ENCODE measurements at regions of chr3 and their contacts with region 1.

Region 1: DNA sequence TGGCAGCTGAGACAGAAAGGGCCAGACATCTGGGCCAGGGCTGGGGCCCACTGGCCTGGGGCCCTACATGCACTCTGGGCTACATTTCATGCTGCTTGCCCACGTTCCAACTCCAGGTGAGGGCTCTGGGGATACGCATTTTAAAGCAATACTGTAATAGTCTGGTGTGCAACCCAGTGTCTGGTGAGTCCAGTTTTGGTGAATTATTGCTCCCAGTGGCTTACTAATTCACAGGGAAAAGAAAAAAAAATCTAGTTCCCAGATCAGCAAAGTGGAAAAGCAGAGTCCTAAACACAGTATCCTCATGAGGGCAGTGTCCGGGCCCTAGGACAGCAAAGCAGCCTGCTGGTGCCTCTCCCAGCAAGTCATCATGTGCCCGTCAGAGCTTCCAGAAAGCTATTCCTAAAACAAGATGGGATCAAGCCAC is 82.4 kb downstream of the CCNL1 start:
- DNase-seq: peak in 2 of 4 donors; percentile 43 to 48
- ATAC-seq: peak; percentile 57
- H3K4me3 ChIP-seq: no peak overlapping the region
- H3K27ac ChIP-seq: peak overlapping the region in 3 of 4 donors; percentile 55 to 73 (median 61)
- H3K4me1 ChIP-seq: peaks cover 25% of the 10 kb centered on the region
- H3K27me3 ChIP-seq: no peaks in the 10 kb centered on the region
- CTCF ChIP-seq: peak in 2 of 7 experiments; percentile 20 to 21
- POLR2A ChIP-seq: peak in 1 of 3 donors; percentile 12

Region 2: DNA sequence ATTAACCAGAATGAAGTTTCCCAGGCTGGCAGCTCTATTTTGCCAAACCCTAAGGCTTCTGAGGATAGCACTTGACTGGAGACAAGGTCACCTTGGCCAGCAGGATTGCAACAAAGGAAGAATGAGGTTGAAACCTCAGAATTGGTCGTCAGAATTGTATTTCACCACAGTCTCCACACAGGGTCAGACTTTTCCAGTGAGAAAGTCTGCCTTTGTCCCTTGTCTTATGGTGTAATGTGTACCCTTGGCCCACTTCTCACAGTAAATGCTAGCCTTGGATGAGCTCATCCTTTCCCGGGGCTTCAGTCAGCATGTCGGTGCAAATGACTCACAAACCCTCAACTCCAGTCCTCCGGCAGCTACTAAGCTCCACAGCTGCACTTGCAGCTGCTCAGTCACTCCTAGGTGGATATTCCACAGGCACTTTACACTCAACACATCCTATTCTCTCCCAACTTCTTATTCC is 542.4 kb before region 1 on chr3:
- intact Hi-C with region 1: loop called (anchors 10 kb)
- DNase-seq: peak; percentile 59 to 86 (median 72)
- ATAC-seq: peak; percentile 94
- H3K4me3 ChIP-seq: no peak overlapping the region
- H3K27ac ChIP-seq: peak overlapping the region; percentile 40 to 75 (median 70)
- H3K4me1 ChIP-seq: peaks cover 32% of the 10 kb centered on the region
- H3K27me3 ChIP-seq: no peaks in the 10 kb centered on the region
- CTCF ChIP-seq: peak in 4 of 7 experiments; percentile 32 to 48 (median 44)
- POLR2A ChIP-seq: peak in 2 of 3 donors; percentile 34 to 43

Region 3: DNA sequence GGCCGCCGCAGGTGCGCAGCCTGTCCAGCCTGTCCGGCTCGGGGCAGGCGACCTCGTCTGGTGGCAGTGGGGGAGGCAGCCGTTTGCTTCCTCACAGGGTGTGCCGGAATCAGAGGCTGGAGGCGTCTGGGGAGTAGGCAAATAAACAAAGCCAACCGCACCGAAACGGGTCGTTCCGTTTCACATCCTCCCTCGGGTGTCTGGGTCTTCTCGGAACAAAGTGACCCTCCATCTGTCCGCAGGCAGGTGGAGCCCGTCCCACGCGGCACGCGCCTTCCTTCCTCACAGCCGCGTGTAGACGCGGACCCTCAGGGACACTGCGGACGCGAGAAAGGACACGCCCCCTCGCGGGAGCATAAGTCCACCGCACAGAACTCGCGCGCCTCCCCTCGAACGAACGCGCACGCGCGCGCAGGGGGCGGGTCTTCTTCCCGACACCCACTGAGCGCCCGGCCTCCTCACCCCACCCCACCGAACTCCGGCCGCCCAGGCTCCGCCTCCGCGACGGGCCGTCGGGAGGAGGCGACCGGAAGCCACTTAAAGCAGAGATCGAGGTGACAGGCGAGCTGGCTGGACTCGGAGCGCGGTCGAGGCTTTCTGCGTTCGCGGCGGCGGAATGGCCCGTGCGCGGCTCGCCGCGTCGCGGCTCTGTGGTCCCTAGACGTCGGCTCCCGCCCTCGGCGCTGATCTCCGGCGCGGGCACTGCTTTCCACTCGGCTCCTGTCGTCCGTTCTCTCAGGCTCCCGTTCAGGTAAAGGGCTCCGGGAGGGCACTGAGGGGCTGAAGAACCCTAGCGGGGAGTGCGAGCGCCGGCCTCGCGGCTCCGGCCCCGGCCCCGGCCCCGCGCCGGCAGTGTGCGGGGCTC is 403.3 kb before region 1 on chr3 and contains the start of gene TIPARP:
- intact Hi-C with region 1: loop called (anchors 10 kb)
- DNase-seq: peak; percentile 99
- ATAC-seq: peak; percentile 93
- H3K4me3 ChIP-seq: peak within 1 kb of the TSS; percentile 55 to 60
- H3K27ac ChIP-seq: peak within 1 kb of the TSS; percentile 93 to 95 (median 94)
- H3K4me1 ChIP-seq: peaks cover 17% of the 10 kb centered on the region
- H3K27me3 ChIP-seq: no peaks in the 10 kb centered on the region
- CTCF ChIP-seq: peak; percentile 41 to 94 (median 68)
- POLR2A ChIP-seq: peak; percentile 99
- total RNA-seq, gene TIPARP: 12.5 to 13.2 TPM

Region 4: DNA sequence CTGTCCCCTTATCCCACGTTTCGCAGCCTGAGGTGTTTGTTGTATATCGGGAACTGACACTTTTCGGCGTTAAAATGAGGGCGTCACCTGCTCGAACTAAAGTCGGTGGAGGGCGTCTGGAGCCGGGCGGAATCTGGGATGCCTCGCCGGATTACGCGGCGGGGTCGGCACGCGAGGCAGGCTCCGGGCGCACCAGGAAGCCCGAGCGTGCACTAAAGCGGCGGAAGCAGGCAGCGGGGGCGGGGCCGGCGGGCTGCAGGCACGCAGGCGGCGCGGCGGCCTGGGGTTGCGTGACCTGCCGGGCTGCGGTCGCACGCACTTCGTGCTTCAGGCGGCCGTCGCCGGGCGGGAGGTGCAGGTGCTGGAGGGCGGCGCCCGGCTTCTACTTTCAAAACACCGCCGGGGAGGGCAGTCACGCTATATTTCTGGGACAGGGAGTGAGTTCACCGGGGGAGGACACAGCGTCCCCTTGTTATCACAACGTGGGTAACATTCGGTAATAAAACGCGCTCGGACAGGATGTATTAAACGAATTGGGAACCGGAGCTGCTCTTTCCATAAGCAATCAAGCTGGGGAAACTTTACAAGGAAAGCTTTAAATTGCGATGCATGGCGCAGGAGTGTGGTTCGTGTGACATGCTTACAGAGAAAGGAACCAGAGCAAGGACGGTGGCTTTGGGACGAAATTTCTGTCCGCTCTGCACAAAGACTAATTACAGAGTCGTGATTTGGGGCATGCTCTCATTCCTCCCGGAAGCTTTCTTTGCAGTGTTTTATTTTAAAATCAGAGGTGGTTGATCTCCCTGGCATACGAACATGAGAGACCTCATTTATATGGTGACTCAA is 260.6 kb before region 1 on chr3:
- intact Hi-C with region 1: no loop called
- DNase-seq: peak; percentile 89 to 93 (median 90)
- ATAC-seq: peak; percentile 87
- H3K4me3 ChIP-seq: peak overlapping the region; percentile 18 to 19
- H3K27ac ChIP-seq: peak overlapping the region; percentile 89 to 97 (median 92)
- H3K4me1 ChIP-seq: peaks cover 50% of the 10 kb centered on the region
- H3K27me3 ChIP-seq: no peaks in the 10 kb centered on the region
- CTCF ChIP-seq: no peak
- POLR2A ChIP-seq: peak; percentile 90 to 94 (median 93)

Region 5: GRCh38 chr3:156837115-156837514 is 240.5 kb before region 1 on chr3:
- intact Hi-C with region 1: loop called (anchors 10 kb)
- DNase-seq: no peak
- ATAC-seq: no peak
- H3K4me3 ChIP-seq: no peak overlapping the region
- H3K27ac ChIP-seq: no peak overlapping the region
- H3K4me1 ChIP-seq: peaks cover 11% of the 10 kb centered on the region
- H3K27me3 ChIP-seq: no peaks in the 10 kb centered on the region
- CTCF ChIP-seq: no peak
- POLR2A ChIP-seq: no peak

Measured in body of pancreas (tissue), 4 donors.